GM13977 (cell line): ENCODE measurements at regions of chr1 and their contacts with region 1.

Region 1: DNA sequence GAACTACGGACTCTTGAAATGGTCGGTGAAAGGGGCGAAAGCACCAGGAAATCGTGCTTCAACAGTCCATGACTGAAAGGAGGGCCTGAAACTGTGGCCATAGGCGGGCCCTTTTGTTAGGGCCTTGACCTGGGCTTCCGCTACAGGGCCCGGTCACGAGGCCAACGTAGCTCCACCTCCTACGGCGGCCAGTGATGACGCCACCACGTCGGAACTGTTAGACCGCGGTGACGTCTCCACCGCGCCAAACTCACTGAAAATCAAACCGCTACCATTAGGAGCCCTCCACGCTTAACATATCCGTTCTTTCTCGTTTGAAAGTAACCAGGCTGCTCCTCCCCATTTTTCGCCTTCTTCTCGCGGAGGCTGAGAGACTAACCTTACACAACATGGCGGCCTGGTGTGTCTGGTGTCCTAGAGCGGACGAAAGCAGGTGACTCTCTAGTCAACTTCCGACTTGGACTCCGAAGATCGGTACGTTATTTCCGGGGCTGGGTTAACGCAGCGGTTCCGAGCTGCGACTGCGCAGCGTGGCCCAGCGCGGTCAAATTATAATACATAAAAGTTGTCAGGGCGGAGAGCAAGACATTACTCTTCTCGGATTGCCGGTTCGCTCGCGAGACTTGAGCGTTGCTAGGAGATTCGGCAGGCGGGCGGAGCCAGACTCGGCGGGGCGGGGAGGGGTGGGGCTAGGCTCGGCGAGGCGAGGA is 376 bp upstream of the CACYBP start:
- DNase-seq: peak; percentile 96
- CTCF ChIP-seq: no peak

Region 2: GRCh38 chr1:174262349-174263241 is 736.8 kb before region 1 on chr1:
- in situ Hi-C with region 1: loop called (anchors 25 kb)
- DNase-seq: peak; percentile 47
- CTCF ChIP-seq: peak; percentile 70

Region 3: GRCh38 chr1:174769961-174770549 is 229.3 kb before region 1 on chr1:
- in situ Hi-C with region 1: loop called (anchors 10 kb)
- DNase-seq: peak; percentile 26
- CTCF ChIP-seq: peak; percentile 57

Region 4: GRCh38 chr1:174892016-174892415 is 107.4 kb before region 1 on chr1:
- in situ Hi-C with region 1: no loop called
- DNase-seq: no peak
- CTCF ChIP-seq: no peak